GM18951 (cell line): ENCODE measurements at regions of chr1 and their contacts with region 1.

Region 1: DNA sequence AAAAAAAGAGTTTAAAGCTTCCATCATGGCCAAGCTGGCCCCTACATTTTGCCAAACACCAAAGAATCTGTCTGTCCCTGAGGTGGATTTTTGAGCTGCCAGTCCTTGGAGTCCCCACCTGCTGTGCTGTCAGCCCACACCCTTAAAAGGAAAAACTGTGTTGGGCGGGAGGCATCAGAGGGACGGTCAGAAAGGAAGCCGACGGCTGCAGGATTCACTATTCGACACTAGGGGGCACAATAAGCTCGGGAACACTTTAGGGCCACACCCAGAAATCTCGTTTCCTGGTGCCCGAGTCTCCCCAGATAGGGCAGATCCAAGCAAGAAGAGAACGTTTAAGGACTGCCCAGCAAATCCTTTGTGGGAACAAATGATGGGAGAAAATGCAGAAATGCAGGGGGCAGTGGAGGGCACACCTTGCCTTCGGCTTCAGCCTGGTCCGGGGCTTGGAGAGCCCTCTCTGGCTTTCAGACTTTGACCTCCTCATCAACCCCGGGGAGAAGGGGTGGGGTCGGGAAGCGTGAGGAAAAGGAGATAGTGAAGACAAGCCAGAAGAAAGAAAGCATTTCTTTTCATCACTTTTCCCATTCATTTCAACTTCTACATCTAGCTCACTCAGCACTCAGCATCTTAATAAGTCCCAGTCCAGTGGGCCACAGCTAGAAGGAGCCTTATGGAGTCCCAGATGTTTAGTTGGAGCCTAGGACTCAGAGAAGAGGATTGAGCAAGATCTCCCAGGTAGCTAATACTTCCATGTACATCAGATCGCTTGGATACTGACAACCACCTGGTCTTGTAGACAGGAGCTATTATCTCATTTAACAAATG is 5.0 kb upstream of the CTTNBP2NL start:
- POLR2A ChIP-seq: no peak

Region 2: DNA sequence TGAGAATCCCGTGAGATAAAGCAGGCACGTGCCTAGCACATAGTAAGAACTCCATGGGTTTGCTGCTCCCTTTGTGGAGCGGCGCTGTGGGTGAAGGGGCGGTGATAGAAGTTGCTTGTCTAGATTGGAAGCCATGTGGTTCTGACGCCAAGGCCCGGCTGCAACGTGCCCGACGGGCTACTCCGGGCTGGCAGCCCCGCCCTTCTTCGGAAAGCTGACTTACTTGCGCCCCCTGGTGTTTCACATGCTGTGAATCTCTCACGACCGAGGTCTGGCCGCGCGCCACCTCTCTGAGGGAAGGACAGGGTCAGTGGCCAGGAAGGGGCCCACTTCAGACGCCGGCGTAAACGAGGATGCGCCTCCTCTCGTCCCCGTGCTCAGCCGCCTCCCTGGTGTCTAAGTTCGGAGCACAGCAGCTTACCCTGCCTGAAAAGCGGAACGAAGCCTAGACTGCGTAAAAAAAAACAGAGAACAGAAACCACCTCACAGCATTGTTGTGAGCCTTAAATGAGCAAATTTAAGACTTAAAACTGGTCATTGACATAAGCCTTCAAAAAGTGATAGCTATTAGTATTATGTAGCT is 75.2 kb after region 1 on chr1:
- in situ Hi-C with region 1: loop called (anchors 10 kb)
- POLR2A ChIP-seq: peak; percentile 39

Region 3: DNA sequence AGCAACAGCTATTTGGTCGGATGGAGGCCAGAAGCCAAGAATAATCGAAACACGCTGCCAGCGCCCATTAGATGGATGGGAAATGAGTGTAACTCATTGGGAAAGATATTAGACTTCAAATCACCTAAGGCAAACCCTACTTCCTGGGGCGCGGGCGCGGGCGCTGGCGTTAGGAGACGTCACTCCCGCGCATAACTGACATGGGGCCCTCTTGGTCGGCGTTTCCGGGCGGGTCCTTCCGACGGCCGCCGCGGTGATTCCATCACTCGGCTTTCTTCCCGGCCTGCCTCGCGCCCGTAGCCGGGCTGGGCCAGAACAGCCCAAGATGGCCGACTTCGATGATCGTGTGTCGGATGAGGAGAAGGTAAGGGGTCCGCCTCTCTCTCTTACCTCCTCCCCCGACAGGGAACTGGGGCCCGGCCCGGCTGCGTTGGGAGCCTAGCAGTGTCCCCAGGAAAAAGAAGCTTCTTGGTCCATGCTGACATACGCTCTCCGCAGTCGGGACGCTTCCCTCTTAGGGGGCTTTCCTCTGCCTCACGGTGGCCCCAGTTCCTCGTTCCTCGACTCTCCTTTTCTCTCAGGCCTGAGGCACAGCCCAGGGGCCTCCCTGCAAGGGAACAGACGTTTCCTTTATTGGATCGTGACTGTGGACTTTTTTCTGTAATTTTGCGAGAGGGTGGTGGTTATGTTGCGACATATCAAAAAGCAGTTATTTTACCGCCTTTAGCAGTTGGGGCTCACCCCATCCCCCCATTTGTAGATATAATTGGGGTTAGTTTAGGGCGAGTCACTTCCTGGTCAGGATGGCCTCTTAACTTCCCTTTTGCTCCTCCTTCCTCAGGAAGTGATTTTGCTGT is 228.8 kb after region 1 on chr1 and contains the start of gene CAPZA1:
- in situ Hi-C with region 1: loop called (anchors 10 kb)
- POLR2A ChIP-seq: peak; percentile 94

Region 4: GRCh38 chr1:112660072-112660471 is 269.1 kb after region 1 on chr1:
- in situ Hi-C with region 1: no loop called
- POLR2A ChIP-seq: no peak

Region 5: DNA sequence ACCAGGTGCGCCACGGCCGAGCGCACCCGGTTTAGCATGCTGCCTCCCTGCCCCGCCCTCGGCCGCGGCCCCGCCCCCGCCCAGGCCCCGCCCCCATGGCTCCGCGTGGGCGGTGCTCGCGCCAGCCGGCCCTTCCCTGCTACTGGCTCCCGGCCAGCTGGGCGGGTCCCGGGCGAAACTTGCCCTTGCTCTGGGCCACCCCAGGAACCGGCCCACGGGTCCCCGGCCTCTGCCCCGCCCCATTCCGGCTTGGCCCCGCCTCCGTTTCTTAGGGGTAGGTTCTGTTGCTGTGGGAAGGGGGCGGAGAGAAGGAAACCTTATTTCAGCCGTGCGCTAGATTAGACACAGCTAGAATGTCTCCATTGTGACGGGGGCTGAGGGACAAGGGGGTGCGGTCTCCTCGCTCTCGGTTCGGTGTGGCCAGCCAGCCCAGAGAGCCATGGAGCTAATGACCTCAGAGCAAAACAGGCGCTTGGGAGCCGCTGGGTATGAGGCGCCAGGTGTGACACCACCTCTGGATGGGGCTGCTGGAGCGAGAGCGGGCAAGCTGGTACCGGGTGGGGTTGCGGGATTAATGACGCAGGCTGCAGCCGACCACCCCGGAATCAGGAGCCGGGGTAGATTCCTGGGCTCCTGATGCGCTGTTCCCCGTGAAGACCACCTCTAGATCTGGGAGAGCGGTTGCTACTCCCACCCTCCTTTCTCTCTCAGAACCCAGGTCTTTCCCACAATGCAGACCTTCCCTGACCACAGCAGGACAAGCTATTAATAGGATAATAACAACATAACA is 324.5 kb after region 1 on chr1 and contains the start of gene PPM1J:
- in situ Hi-C with region 1: loop called (anchors 5 kb)
- POLR2A ChIP-seq: no peak

Region 6: GRCh38 chr1:112803906-112804762 is 413.1 kb after region 1 on chr1:
- in situ Hi-C with region 1: loop called (anchors 25 kb)
- POLR2A ChIP-seq: no peak

Region 7: GRCh38 chr1:113320972-113321690 is 930.1 kb after region 1 on chr1:
- in situ Hi-C with region 1: no loop called
- POLR2A ChIP-seq: no peak